ENCODE measurements at regions of chr7 and their contacts with region 1.

Region 1: DNA sequence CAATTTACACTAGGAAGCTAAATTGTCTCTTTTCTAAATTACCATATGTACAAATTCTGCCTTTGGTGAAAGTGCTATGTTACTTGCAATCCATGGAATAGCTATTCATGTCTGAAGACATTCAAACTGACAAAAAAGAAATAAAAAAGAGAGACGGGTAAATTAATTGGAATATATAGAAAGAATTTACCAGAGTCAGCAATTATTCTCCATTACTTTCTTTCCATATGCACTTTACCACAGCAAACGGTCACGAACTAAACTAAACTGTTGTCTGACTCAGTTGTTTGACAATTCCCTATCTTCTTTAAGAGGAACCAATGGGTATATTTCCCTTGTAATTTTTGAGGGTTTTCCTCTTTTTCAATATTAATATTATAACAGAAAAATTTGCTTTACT is 85.7 kb downstream of the HOXA1 start:
- DNase-seq: no peak
- ATAC-seq: no peak
- H3K4me3 ChIP-seq: no peak overlapping the region
- H3K27ac ChIP-seq: no peak overlapping the region
- H3K4me1 ChIP-seq: no peaks in the 10 kb centered on the region
- H3K27me3 ChIP-seq: no peaks in the 10 kb centered on the region
- CTCF ChIP-seq: no peak
- POLR2A ChIP-seq: no peak

Region 2: GRCh38 chr7:27071622-27072390 is 61.7 kb after region 1 on chr7:
- intact Hi-C with region 1: loop called in 1 of 10 experiments (anchors 10 kb)
- DNase-seq: no peak
- ATAC-seq: no peak
- H3K4me3 ChIP-seq: no peak overlapping the region
- H3K27ac ChIP-seq: no peak overlapping the region
- H3K4me1 ChIP-seq: no peaks in the 10 kb centered on the region
- H3K27me3 ChIP-seq: peaks cover 0 to 49% (median 0%) of the 10 kb centered on the region in 9 donors
- CTCF ChIP-seq: no peak
- POLR2A ChIP-seq: no peak

Region 3: GRCh38 chr7:27399791-27400567 is 389.9 kb after region 1 on chr7:
- intact Hi-C with region 1: no loop called
- DNase-seq: no peak
- ATAC-seq: no peak
- H3K4me3 ChIP-seq: no peak overlapping the region
- H3K27ac ChIP-seq: no peak overlapping the region
- H3K4me1 ChIP-seq: peaks cover 0 to 8% (median 0%) of the 10 kb centered on the region in 12 donors
- H3K27me3 ChIP-seq: peaks cover 0 to 10% (median 0%) of the 10 kb centered on the region in 9 donors
- CTCF ChIP-seq: no peak
- POLR2A ChIP-seq: no peak